Transverse colon (tissue), 4 donors: ENCODE measurements at regions of chr1 and their contacts with region 1.

Region 1: GRCh38 chr1:110630839-110631663 is 24.9 kb upstream of the KCNA2 start:
- DNase-seq: peak; percentile 86
- H3K4me3 ChIP-seq: no peak overlapping the region
- H3K27ac ChIP-seq: peak overlapping the region; percentile 36 to 74 (median 46)
- H3K4me1 ChIP-seq: peaks cover 0 to 16% (median 7%) of the 10 kb centered on the region in 4 donors
- H3K27me3 ChIP-seq: peaks cover 13% of the 10 kb centered on the region
- CTCF ChIP-seq: peak; percentile 76 to 83 (median 81)
- EP300 ChIP-seq: no peak
- POLR2A ChIP-seq: no peak

Region 2: DNA sequence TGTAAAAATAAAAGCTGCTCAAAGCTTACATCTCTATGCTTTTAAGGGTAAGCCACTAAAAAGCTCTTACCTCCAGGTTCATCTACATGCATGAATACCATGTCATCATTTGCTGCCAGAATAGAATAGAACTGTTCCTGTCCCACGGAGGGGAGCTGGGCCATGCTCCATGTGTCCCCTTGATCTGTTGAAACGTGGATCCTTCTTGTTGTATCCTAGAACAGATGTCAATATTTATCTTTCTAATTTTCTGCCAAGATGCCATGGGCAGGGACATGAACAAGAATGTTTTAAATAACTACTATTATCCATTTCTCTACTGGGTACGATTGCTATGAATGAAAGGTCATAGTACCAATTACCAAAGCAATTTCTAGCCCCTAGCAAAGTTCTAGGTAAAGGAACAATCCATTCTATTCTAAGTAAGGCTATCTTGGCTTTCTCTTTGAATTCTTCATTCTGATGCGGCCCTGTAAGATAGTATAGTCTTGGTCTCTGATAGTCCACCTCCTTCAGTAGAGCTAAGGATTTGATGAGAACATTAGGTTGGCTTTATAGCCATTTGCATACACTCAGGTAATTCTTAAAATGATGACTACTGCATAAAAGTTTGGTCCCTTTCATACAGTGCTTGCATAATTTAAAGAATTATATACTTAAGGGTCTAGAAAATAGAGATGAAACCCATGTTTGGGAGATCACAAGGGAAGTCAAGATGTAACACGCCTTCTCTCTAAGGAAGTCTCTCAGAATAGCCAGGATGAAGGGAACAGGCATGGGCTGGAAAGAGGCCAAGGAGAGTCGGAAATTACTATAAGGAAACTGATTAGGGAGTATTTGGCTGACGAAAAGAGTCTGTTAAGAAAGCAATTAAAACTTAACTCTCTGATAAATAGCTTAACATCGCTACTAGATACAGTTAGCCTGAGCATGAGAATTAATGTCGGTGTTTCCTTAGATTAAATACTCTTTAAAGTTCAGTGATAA is 1288.8 kb before region 1 on chr1:
- in situ Hi-C with region 1: no loop called
- intact Hi-C with region 1: no loop called
- DNase-seq: no peak
- H3K4me3 ChIP-seq: no peak overlapping the region
- H3K27ac ChIP-seq: no peak overlapping the region
- H3K4me1 ChIP-seq: no peaks in the 10 kb centered on the region
- H3K27me3 ChIP-seq: no peaks in the 10 kb centered on the region
- CTCF ChIP-seq: no peak
- EP300 ChIP-seq: no peak
- POLR2A ChIP-seq: no peak

Region 3: DNA sequence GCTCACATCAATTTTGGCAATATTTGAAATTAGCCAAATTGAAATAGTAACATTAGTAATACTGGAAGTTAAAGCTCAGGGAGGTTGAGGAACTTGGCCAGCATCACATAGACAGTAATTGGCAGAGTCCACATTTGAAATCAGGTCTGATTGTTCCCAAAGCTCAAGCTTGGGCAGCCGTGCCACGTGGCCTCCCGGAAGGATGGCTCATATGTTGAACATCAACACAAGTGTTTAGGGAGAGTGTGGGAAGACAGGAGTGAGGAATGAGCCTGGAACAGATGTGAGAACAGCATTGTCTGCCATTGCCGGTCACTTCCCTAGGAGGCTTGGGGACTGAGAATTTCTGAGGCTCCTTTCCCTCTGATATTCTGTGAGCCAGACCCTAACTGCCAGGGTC is 332.1 kb before region 1 on chr1:
- in situ Hi-C with region 1: no loop called
- intact Hi-C with region 1: no loop called
- DNase-seq: no peak
- H3K4me3 ChIP-seq: no peak overlapping the region
- H3K27ac ChIP-seq: no peak overlapping the region
- H3K4me1 ChIP-seq: no peaks in the 10 kb centered on the region
- H3K27me3 ChIP-seq: peaks cover 3% of the 10 kb centered on the region
- CTCF ChIP-seq: no peak
- EP300 ChIP-seq: no peak
- POLR2A ChIP-seq: no peak

Region 4: GRCh38 chr1:110766025-110766647 is 135.1 kb after region 1 on chr1:
- in situ Hi-C with region 1: loop called in 2 of 4 experiments (anchors 10 to 25 kb)
- intact Hi-C with region 1: loop called (anchors 5 kb)
- DNase-seq: peak; percentile 25
- H3K4me3 ChIP-seq: no peak overlapping the region
- H3K27ac ChIP-seq: no peak overlapping the region
- H3K4me1 ChIP-seq: peaks cover 0 to 3% (median 0%) of the 10 kb centered on the region in 4 donors
- H3K27me3 ChIP-seq: peaks cover 19% of the 10 kb centered on the region
- CTCF ChIP-seq: peak; percentile 69 to 78 (median 76)
- EP300 ChIP-seq: no peak
- POLR2A ChIP-seq: no peak

Region 5: DNA sequence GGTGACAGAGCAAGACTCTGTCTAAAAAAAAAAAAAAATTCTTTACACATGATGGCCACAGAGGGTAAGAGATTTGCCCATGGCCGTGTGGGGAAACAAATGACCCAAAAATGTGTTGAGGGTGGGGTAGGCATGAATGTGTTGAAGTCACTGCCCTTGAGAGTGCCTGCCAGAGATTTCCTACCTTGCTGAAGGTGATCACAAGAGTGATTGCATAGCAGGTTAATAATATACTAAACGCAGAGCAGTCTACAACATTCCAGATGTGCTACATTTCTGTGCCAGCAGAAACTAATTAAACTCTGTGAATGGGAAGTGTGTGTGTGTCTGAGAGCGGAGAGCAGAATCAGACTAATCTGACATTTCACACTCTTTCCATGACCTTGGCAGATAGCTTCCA is 148.5 kb after region 1 on chr1:
- in situ Hi-C with region 1: loop called in 1 of 4 experiments (anchors 25 kb)
- intact Hi-C with region 1: loop called (anchors 5 kb)
- DNase-seq: no peak
- H3K4me3 ChIP-seq: no peak overlapping the region
- H3K27ac ChIP-seq: no peak overlapping the region
- H3K4me1 ChIP-seq: no peaks in the 10 kb centered on the region
- H3K27me3 ChIP-seq: peaks cover 11% of the 10 kb centered on the region
- CTCF ChIP-seq: no peak
- EP300 ChIP-seq: no peak
- POLR2A ChIP-seq: no peak